ENCODE measurements at regions of chr11 and their contacts with region 1.

Region 1: DNA sequence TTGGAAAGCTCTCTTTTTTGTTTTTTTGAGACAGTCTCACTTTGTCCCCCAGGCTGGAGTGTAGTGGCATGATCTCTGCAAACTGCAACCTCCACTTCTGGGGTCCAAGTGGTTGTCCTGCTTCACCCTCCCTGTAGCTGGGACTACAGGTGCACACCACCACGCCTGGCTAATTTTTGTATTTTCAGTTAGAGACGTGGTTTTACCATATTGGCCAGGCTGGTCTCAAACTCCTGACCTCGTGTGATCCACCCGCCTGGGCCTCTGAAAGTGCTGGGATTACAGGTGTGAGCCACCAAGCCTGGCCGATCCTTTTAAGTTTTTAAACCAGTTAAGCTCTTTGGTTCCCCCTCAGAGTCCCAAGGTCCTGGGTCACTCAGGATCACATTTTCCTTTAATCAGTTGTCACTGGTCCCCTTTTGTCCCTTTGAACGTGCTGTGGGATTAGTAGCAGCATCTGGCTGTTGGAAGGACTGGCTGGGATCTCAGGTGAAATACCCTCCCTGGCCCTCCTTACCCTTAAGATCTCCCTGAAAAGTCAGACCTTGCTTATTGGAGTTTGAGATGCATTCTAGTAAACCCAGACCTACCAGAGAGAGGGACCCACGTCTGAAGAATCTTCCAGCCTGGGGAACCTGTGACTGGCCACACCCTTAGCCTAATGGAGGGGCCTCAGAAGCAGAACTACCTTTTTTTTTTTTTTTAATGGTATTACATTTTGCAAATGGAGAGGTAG is 8.1 kb downstream of the MALAT1 start:
- DNase-seq: peak in 3 of 5 donors; percentile 40 to 72 (median 52)
- H3K4me3 ChIP-seq: no peak overlapping the region
- H3K4me3 Mint-ChIP-seq: no peak overlapping the region
- H3K27ac ChIP-seq: peak overlapping the region; percentile 35
- H3K27ac Mint-ChIP-seq: peak overlapping the region in 6 of 7 donors; percentile 84 to 96 (median 93)
- H3K4me1 ChIP-seq: peaks cover 52% of the 10 kb centered on the region
- H3K4me1 Mint-ChIP-seq: peaks cover 35 to 64% (median 50%) of the 10 kb centered on the region in 4 donors
- H3K27me3 ChIP-seq: no peaks in the 10 kb centered on the region
- H3K27me3 Mint-ChIP-seq: no peaks in the 10 kb centered on the region

Region 2: DNA sequence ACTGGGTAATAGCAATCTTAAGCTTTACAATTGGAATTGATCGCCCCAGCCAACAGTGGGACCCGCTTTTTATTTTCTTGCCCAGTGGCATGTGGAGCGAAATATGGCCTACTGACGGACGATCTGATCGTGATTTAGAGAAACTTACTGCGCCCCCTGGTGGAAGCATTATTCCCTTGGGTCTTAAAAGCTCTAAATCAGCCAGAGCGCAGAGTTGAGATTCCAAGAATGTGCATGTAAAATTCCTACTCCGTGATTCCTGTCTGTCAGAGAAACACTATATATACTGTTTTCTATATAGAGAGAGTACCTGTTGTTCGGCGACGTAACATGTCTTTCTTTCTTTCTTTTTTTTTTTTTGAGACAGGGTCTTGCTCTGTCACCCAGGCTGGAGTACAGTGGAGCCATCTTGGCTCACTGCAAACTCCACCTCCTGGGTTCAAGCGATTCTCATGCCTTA is 177.0 kb before region 1 on chr11:
- CTCF ChIA-PET with region 1: interaction called, 19 read pairs
- POLR2A ChIA-PET with region 1: interaction called, 31 read pairs
- intact Hi-C with region 1: no loop called
- DNase-seq: peak; percentile 69 to 81 (median 75)
- H3K4me3 ChIP-seq: no peak overlapping the region
- H3K4me3 Mint-ChIP-seq: peak overlapping the region in 3 of 8 donors; percentile 28 to 64 (median 43)
- H3K27ac ChIP-seq: no peak overlapping the region
- H3K27ac Mint-ChIP-seq: peak overlapping the region in 4 of 7 donors; percentile 53 to 86 (median 68)
- H3K4me1 ChIP-seq: peaks cover 11% of the 10 kb centered on the region
- H3K4me1 Mint-ChIP-seq: peaks cover 8 to 22% (median 14%) of the 10 kb centered on the region in 4 donors
- H3K27me3 ChIP-seq: no peaks in the 10 kb centered on the region
- H3K27me3 Mint-ChIP-seq: peaks cover 0 to 2% of the 10 kb centered on the region in 2 donors

Region 3: DNA sequence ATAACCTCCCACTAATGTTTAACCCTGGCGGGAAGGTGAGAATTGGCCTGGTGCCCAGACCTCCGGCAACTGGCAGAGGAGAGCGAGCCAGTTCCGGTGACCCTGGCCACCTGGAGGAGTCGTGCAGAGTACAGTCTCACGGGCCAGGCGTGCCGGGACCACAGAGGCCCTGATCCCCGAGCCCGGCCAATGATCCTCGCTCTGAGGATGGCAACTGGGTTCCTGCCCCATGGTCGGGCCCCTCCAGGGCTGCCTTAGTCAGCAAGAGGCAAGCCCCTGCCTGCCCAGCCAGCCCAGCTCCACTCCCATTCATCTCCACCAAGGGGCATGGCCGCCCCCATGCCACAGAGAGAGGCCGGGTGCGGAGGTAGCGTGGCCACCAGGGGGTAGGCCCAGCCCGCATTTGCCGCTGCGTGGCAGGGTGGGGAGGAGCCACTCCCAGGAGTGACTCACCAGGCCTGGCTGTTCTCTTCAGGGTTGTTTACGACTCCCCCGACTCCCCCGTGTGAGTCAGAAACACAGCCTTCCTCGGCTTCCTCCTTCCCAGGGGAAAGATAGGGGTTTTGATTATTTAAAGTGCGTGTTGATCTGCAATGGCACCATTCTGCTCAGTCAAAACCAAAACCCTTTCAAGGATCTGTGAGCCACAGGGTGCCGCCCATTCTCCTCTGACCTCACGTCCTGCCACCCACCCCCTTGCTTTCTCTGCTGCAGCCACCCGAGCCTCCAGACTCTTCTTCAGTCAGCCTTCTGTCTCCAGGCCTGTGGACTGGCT is 124.7 kb before region 1 on chr11 and contains the start of gene SLC25A45:
- CTCF ChIA-PET with region 1: interaction called, 75 read pairs
- POLR2A ChIA-PET with region 1: interaction called, 654 read pairs
- intact Hi-C with region 1: loop called (anchors 1 kb)
- DNase-seq: peak; percentile 89 to 98 (median 91)
- H3K4me3 ChIP-seq: peak within 1 kb of the TSS; percentile 67 to 76
- H3K4me3 Mint-ChIP-seq: peak within 1 kb of the TSS; percentile 85 to 95 (median 91)
- H3K27ac ChIP-seq: peak within 1 kb of the TSS; percentile 94
- H3K27ac Mint-ChIP-seq: peak within 1 kb of the TSS; percentile 96 to 100 (median 99)
- H3K4me1 ChIP-seq: peaks cover 58% of the 10 kb centered on the region
- H3K4me1 Mint-ChIP-seq: peaks cover 22 to 63% (median 44%) of the 10 kb centered on the region in 4 donors
- H3K27me3 ChIP-seq: no peaks in the 10 kb centered on the region
- H3K27me3 Mint-ChIP-seq: no peaks in the 10 kb centered on the region
- total RNA-seq, gene SLC25A45: 17.0 to 24.2 TPM

Region 4: GRCh38 chr11:65448418-65449105 is 58.4 kb before region 1 on chr11:
- CTCF ChIA-PET with region 1: interaction called, 3 read pairs
- POLR2A ChIA-PET with region 1: interaction called, 41 read pairs
- intact Hi-C with region 1: no loop called
- DNase-seq: peak in 1 of 5 donors; percentile 33
- H3K4me3 ChIP-seq: no peak overlapping the region
- H3K4me3 Mint-ChIP-seq: no peak overlapping the region
- H3K27ac ChIP-seq: no peak overlapping the region
- H3K27ac Mint-ChIP-seq: peak overlapping the region in 5 of 7 donors; percentile 38 to 64 (median 53)
- H3K4me1 ChIP-seq: no peaks in the 10 kb centered on the region
- H3K4me1 Mint-ChIP-seq: peaks cover 3 to 17% (median 4%) of the 10 kb centered on the region in 4 donors
- H3K27me3 ChIP-seq: no peaks in the 10 kb centered on the region
- H3K27me3 Mint-ChIP-seq: no peaks in the 10 kb centered on the region

Region 5: GRCh38 chr11:65477149-65477965 is 29.6 kb before region 1 on chr11:
- CTCF ChIA-PET with region 1: interaction called, 86 read pairs
- POLR2A ChIA-PET with region 1: interaction called, 1,536 read pairs
- intact Hi-C with region 1: no loop called
- DNase-seq: peak; percentile 78 to 90 (median 82)
- H3K4me3 ChIP-seq: peak overlapping the region; percentile 90 to 93
- H3K4me3 Mint-ChIP-seq: peak overlapping the region; percentile 95 to 100 (median 100)
- H3K27ac ChIP-seq: peak overlapping the region; percentile 93
- H3K27ac Mint-ChIP-seq: peak overlapping the region; percentile 97 to 100 (median 99)
- H3K4me1 ChIP-seq: peaks cover 20% of the 10 kb centered on the region
- H3K4me1 Mint-ChIP-seq: peaks cover 10 to 26% (median 17%) of the 10 kb centered on the region in 4 donors
- H3K27me3 ChIP-seq: no peaks in the 10 kb centered on the region
- H3K27me3 Mint-ChIP-seq: no peaks in the 10 kb centered on the region

Measured in CD4-positive, alpha-beta memory T cell (primary cell).